SK-N-SH (cell line): ENCODE measurements at regions of chr7 and their contacts with region 1.

Region 1: DNA sequence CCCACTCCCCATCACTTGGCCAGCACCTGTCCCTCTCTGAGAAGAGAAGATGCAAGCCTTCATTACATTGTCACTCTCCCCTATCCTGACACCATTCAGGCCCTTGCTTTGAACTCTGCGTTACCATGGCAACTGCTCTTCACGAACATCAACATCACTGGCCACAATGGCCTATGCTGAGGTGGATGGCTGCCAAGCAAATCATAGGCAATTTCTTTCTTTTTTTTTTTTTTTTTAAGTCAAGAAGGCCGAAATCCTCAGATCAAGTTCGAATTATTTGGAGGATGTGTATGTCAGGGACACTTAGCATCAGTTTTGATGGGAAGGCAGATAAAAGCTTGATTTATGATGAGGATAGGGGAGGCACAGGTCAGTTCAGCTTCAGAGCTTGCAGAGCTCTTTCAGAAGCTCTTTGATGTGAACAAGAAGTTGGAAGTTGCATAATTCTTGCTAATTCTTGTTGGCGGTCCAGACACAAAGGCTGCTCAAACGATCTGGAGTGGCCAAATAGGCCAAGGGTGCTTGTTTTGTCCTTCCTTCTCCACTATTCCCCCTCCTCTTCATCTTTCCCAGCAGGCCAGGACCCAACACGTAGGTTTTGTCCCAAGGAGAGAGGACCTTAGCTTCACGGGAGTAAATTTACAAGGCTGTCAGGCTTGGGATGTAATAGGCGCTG is 179.9 kb upstream of the NPVF start:
- DNase-seq: no peak
- H3K4me3 ChIP-seq: no peak overlapping the region
- H3K27ac ChIP-seq: no peak overlapping the region
- H3K4me1 ChIP-seq: no peaks in the 10 kb centered on the region; a peak in 1 of 4 replicates
- H3K27me3 ChIP-seq: no peaks in the 10 kb centered on the region
- CTCF ChIP-seq: no peak
- EP300 ChIP-seq: no peak
- RAD21 ChIP-seq: no peak

Region 2: DNA sequence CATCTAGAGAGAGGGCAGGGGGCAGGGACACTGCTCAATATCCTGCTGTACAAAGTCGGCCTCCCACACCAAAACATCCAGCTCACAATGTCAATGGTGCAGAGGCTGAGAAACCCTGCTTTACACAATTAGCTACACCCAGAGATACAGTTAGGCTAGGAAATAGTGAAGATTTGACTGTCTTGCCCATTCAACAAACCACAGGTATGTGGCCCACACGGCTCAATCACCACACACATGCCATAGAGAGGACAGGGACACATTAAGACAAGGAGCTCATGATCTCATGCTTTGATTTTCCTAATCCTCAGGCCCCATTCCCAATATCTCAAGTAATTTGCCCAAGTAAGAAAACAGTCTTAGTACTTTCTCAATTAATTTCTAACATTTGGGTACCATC is 538.6 kb before region 1 on chr7:
- CTCF ChIA-PET with region 1: no interaction called
- POLR2A ChIA-PET with region 1: no interaction called
- DNase-seq: no peak
- H3K4me3 ChIP-seq: no peak overlapping the region
- H3K27ac ChIP-seq: no peak overlapping the region
- H3K4me1 ChIP-seq: peaks cover 0 to 3% of the 10 kb centered on the region in 2 experiments; a peak in 2 of 4 replicates
- H3K27me3 ChIP-seq: no peaks in the 10 kb centered on the region
- CTCF ChIP-seq: no peak
- EP300 ChIP-seq: no peak
- RAD21 ChIP-seq: no peak

Region 3: GRCh38 chr7:25424113-25424512 is 16.0 kb after region 1 on chr7:
- CTCF ChIA-PET with region 1: interaction called, 10 read pairs
- POLR2A ChIA-PET with region 1: no interaction called
- DNase-seq: no peak
- H3K4me3 ChIP-seq: no peak overlapping the region
- H3K27ac ChIP-seq: no peak overlapping the region
- H3K4me1 ChIP-seq: peaks cover 0 to 2% of the 10 kb centered on the region in 2 experiments; a peak in 1 of 4 replicates
- H3K27me3 ChIP-seq: no peaks in the 10 kb centered on the region
- CTCF ChIP-seq: no peak
- EP300 ChIP-seq: no peak
- RAD21 ChIP-seq: no peak